Right lobe of liver (tissue), 6 donors: ENCODE measurements at regions of chr13 and their contacts with region 1.

Region 1: GRCh38 chr13:111046590-111047141 is 68.4 kb upstream of the ARHGEF7 start:
- DNase-seq: no peak
- ATAC-seq: peak in 1 of 4 donors; percentile 61
- H3K4me3 ChIP-seq: no peak overlapping the region
- H3K27ac ChIP-seq: no peak overlapping the region
- H3K4me1 ChIP-seq: no peaks in the 10 kb centered on the region
- H3K27me3 ChIP-seq: no peaks in the 10 kb centered on the region
- CTCF ChIP-seq: no peak
- POLR2A ChIP-seq: no peak

Region 2: DNA sequence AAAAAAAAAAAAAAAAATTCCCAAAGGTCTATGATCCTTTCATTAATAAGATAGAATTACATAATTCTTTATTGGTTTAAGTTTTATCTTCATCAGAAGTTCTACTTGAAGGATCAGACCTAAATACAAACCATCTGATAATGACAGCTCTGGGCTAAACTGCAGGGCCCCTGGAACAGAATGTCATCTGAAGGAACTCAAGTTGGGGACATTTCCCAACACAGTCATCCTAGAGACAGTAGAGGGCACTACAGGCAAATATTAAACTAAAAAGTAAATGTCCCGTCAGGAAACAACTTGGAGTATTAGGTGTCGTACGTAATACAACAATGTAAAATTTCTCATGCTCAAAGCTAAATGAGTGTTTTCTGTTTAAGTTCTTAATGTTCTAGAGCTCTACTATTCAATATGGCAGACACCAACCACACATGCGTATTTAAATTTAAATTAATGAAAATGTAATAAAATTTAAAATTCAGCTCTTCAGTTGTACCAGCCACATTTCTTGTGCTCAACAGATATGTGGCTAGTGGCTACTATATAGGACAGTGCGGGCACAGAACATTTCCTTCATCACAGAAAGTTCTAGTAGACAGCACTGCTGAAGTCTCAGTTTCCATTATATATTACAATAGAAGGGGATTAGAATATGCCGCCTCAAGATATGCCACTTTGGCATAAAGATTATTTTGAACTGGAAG is 453.1 kb before region 1 on chr13:
- intact Hi-C with region 1: loop called in 1 of 2 experiments (anchors 10 kb)
- DNase-seq: peak in 1 of 3 donors; percentile 38
- ATAC-seq: peak; percentile 95 to 98 (median 97)
- H3K4me3 ChIP-seq: no peak overlapping the region
- H3K27ac ChIP-seq: no peak overlapping the region
- H3K4me1 ChIP-seq: no peaks in the 10 kb centered on the region
- H3K27me3 ChIP-seq: no peaks in the 10 kb centered on the region
- CTCF ChIP-seq: peak; percentile 61 to 73 (median 70)
- POLR2A ChIP-seq: no peak

Region 3: GRCh38 chr13:110882972-110883371 is 163.7 kb before region 1 on chr13:
- intact Hi-C with region 1: no loop called
- DNase-seq: no peak
- ATAC-seq: no peak
- H3K4me3 ChIP-seq: no peak overlapping the region
- H3K27ac ChIP-seq: no peak overlapping the region
- H3K4me1 ChIP-seq: no peaks in the 10 kb centered on the region
- H3K27me3 ChIP-seq: no peaks in the 10 kb centered on the region
- CTCF ChIP-seq: no peak
- POLR2A ChIP-seq: no peak

Region 4: GRCh38 chr13:110937511-110938285 is 109.0 kb before region 1 on chr13:
- intact Hi-C with region 1: loop called in 1 of 2 experiments (anchors 10 kb)
- DNase-seq: no peak
- ATAC-seq: peak in 3 of 4 donors; percentile 27 to 45 (median 38)
- H3K4me3 ChIP-seq: no peak overlapping the region
- H3K27ac ChIP-seq: no peak overlapping the region
- H3K4me1 ChIP-seq: no peaks in the 10 kb centered on the region
- H3K27me3 ChIP-seq: no peaks in the 10 kb centered on the region
- CTCF ChIP-seq: no peak
- POLR2A ChIP-seq: no peak